CD4-positive, alpha-beta T cell (primary cell): ENCODE measurements at regions of chr11 and their contacts with region 1.

Region 1: GRCh38 chr11:12702999-12703469 is 28.8 kb downstream of the TEAD1 start:
- DNase-seq: no peak
- ATAC-seq: no peak
- H3K4me3 ChIP-seq: no peak overlapping the region
- H3K4me3 Mint-ChIP-seq: no peak overlapping the region
- H3K27ac ChIP-seq: no peak overlapping the region
- H3K27ac Mint-ChIP-seq: no peak overlapping the region
- H3K4me1 ChIP-seq: no peaks in the 10 kb centered on the region
- H3K4me1 Mint-ChIP-seq: peaks cover 6% of the 10 kb centered on the region
- H3K27me3 ChIP-seq: peaks cover 14 to 43% of the 10 kb centered on the region in 2 experiments
- H3K27me3 Mint-ChIP-seq: peaks cover 95% of the 10 kb centered on the region
- CTCF ChIP-seq: no peak

Region 2: GRCh38 chr11:12677131-12677530 is 25.9 kb before region 1 on chr11:
- CTCF ChIA-PET with region 1: no interaction called
- POLR2A ChIA-PET with region 1: no interaction called
- intact Hi-C with region 1: loop called in 1 of 2 experiments (anchors 1 kb)
- DNase-seq: no peak
- ATAC-seq: no peak
- H3K4me3 ChIP-seq: no peak overlapping the region
- H3K4me3 Mint-ChIP-seq: no peak overlapping the region
- H3K27ac ChIP-seq: no peak overlapping the region
- H3K27ac Mint-ChIP-seq: no peak overlapping the region
- H3K4me1 ChIP-seq: peaks cover 19% of the 10 kb centered on the region
- H3K4me1 Mint-ChIP-seq: peaks cover 16% of the 10 kb centered on the region
- H3K27me3 ChIP-seq: peaks cover 49 to 85% of the 10 kb centered on the region in 2 experiments
- H3K27me3 Mint-ChIP-seq: peaks cover 81% of the 10 kb centered on the region
- CTCF ChIP-seq: no peak